Posterior vena cava (tissue), 2 donors: ENCODE measurements at regions of chrX and their contacts with region 1.

Region 1: DNA sequence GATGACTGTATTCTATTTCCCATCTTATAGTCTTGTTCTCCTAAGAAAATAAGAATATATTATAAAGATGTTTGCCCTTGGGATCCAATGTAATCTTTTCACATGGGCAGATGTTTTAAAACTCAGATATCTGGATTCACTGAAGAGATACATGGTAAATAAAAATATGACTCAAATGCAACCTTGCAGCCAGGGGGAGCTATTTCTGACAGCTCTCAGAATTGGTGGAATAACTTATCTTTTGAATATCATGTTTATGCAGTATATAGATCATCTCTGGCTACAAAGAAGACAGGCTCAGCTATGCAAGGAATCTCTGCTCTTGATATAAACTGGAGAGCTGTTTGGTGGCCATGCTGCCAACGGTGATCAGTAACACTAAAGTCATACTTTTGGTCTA is 274.7 kb downstream of the GLUD2 start:
- DNase-seq: no peak

Region 2: DNA sequence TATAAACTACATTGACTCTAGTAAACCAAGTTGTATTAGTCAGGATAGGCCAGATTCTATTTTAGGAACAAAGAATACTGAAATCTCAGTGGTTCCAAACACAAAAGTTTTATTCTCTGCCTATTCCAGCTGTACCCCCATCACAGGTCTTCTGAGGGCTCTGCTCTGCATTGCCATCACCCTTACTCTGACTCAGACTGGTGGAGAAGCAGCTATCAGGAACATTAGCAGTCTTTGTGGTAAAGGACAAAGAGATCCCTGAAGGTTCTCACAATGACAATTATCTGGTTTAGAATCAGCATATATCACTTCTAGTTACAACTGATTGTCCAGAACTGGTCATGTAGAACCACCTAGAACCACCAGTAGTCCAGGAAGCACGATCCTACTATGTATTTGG is 23.7 kb before region 1 on chrX:
- intact Hi-C with region 1: loop called in 1 of 2 experiments (anchors 1 kb)
- DNase-seq: no peak